ENCODE measurements at regions of chr3 and their contacts with region 1.

Region 1: DNA sequence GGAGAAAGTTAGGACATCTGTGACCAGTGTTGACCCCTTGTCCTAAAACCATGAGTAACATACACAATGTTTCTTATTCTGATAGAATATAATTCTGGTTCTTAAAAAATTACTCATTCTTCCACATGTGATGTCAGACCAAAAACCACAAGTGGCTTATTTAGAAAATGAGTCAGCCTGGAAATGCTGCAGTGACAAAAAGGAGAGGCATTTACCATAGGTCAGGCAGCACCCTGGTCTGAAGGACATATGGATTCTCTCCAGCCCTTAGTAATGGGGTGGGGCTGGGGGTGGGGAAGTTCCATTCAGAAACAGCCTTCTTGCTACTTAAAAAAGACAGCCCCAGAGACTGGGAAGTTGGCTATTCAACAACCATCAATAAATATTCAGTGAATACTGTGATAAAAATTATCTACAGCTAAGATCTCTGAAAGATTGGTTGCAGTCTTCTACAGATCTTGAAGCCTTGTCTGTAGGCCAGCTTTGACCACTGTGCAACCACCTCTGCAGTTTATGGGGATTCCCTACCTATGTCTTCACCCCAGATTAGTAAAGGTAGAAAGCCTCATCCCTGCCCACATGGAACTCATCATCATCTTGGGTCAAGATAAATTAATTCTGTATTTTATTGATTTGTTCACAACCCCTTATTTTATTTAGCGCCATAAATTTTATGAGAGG is 34.9 kb upstream of the TIMP4 start:
- DNase-seq: peak; percentile 90
- ATAC-seq: peak; percentile 81
- H3K4me3 ChIP-seq: peak overlapping the region in 1 of 2 experiments; percentile 23; a peak in 2 of 4 replicates
- H3K27ac ChIP-seq: peak overlapping the region; percentile 64
- H3K4me1 ChIP-seq: peaks cover 27 to 45% of the 10 kb centered on the region in 2 experiments
- H3K27me3 ChIP-seq: no peaks in the 10 kb centered on the region
- CTCF ChIP-seq: no peak
- POLR2A ChIP-seq: no peak
- RAD21 ChIP-seq: no peak

Region 2: DNA sequence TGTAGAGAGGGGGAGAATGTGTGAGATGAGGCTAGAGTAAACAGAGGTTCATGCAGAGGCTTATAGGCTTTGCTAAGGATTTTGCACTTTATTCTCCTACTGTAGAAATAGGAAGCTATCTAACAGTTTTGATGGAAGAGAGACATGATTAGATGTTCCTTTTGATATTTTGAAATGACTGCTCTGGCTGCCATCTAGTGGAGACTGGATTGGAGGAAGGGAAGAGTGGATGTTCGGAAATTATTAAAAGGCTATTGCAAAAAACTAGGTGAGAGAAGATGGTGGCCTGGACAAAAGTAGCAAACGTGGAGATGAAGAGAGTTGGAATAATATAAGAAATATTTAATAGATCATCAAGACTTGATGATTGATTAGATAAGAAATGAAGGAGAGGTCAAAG is 147.2 kb before region 1 on chr3:
- CTCF ChIA-PET with region 1: no interaction called
- POLR2A ChIA-PET with region 1: no interaction called
- RAD21 ChIA-PET with region 1: no interaction called
- intact Hi-C with region 1: no loop called
- DNase-seq: peak; percentile 16
- ATAC-seq: peak; percentile 52
- H3K4me3 ChIP-seq: no peak overlapping the region
- H3K27ac ChIP-seq: no peak overlapping the region
- H3K4me1 ChIP-seq: no peaks in the 10 kb centered on the region
- H3K27me3 ChIP-seq: no peaks in the 10 kb centered on the region; the same call in 1 of the 2 replicates
- CTCF ChIP-seq: peak; percentile 56 to 60 (median 57); a peak in 5 of 6 replicates
- POLR2A ChIP-seq: no peak
- RAD21 ChIP-seq: peak; percentile 70

Region 3: GRCh38 chr3:12081826-12082225 is 111.8 kb before region 1 on chr3:
- CTCF ChIA-PET with region 1: no interaction called
- POLR2A ChIA-PET with region 1: no interaction called
- RAD21 ChIA-PET with region 1: no interaction called
- intact Hi-C with region 1: no loop called
- DNase-seq: no peak
- ATAC-seq: no peak
- H3K4me3 ChIP-seq: no peak overlapping the region
- H3K27ac ChIP-seq: no peak overlapping the region
- H3K4me1 ChIP-seq: no peaks in the 10 kb centered on the region
- H3K27me3 ChIP-seq: no peaks in the 10 kb centered on the region
- CTCF ChIP-seq: no peak
- POLR2A ChIP-seq: no peak
- RAD21 ChIP-seq: no peak

Region 4: DNA sequence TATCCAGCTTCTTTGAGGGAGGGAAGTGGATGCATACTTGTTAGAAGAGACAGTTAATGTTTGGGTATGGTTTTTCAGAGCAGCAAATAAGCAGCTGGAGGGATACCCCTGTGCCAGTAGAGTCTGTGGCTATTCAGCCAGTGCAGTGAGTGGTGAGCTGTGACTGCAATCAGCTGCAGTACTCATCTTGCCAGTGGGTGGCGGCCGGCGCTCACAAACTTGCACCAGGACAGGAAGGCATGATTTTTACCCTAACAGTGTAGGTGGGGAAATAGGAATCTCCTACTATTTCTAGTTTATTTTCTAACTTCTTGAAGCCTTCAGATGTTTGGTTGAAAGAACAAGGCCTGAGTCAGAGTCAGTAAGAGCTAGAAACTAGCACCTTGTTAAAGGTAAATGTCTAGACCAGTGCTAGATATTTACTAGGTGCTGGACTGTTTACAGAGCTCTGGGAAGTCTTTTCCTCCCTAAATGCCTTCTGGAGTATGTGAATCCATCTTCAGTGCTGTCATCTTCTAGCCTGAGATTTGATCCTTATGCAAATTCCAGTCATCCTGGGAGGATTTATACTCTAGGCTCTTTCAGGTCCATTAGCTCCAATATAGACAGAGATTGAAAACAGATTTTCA is 58.5 kb before region 1 on chr3:
- CTCF ChIA-PET with region 1: interaction called, 12 read pairs
- POLR2A ChIA-PET with region 1: interaction called, 3 read pairs
- RAD21 ChIA-PET with region 1: no interaction called
- intact Hi-C with region 1: loop called (anchors 1 kb)
- DNase-seq: peak; percentile 34
- ATAC-seq: peak; percentile 96
- H3K4me3 ChIP-seq: no peak overlapping the region
- H3K27ac ChIP-seq: no peak overlapping the region
- H3K4me1 ChIP-seq: no peaks in the 10 kb centered on the region
- H3K27me3 ChIP-seq: no peaks in the 10 kb centered on the region
- CTCF ChIP-seq: peak; percentile 84 to 94 (median 90)
- POLR2A ChIP-seq: no peak
- RAD21 ChIP-seq: peak; percentile 96

Region 5: DNA sequence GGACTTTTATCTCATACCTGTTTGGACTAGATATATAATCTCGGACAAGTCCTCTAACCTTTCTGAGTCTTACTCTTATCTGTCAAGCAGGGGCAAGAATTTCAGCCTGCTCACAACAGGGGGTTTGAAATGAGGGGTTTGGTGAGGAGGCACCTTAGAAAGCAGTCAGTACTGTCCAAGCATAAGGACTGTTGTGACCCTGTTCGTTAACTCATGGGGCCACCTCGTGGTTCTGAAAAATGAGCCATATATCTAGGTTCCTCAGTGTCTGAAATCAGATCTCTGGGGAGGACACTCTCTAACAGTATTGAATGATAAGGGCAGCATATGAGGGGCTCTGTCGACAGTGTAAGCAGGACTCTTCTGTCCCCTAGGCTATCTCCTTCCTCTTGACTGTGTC is 27.7 kb before region 1 on chr3:
- CTCF ChIA-PET with region 1: no interaction called
- POLR2A ChIA-PET with region 1: no interaction called
- RAD21 ChIA-PET with region 1: no interaction called
- intact Hi-C with region 1: no loop called
- DNase-seq: no peak
- ATAC-seq: no peak
- H3K4me3 ChIP-seq: no peak overlapping the region
- H3K27ac ChIP-seq: no peak overlapping the region
- H3K4me1 ChIP-seq: no peaks in the 10 kb centered on the region
- H3K27me3 ChIP-seq: no peaks in the 10 kb centered on the region
- CTCF ChIP-seq: no peak
- POLR2A ChIP-seq: no peak
- RAD21 ChIP-seq: no peak

Region 6: DNA sequence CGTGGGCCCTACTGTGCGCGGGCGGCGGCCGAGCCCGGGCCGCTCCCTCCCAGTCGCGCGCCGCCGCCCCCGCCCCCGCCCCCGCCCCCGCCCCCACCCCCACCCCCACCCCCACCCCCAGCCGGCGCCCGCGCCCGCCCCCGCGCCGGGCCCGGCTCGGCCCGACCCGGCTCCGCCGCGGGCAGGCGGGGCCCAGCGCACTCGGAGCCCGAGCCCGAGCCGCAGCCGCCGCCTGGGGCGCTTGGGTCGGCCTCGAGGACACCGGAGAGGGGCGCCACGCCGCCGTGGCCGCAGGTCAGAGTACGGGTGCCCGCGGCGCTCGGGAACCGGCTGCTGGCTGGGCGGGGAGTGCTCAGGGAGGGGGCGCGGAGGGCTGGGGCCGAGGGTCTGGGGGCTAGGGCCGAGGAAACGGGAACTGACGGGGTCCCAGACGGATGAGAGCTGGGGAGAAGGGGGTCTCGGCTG is 94.1 kb after region 1 on chr3:
- CTCF ChIA-PET with region 1: no interaction called
- POLR2A ChIA-PET with region 1: no interaction called
- RAD21 ChIA-PET with region 1: no interaction called
- intact Hi-C with region 1: loop called (anchors 5 kb)
- DNase-seq: no peak
- ATAC-seq: peak; percentile 64
- H3K4me3 ChIP-seq: peak overlapping the region; percentile 71 to 73
- H3K27ac ChIP-seq: peak overlapping the region; percentile 87
- H3K4me1 ChIP-seq: peaks cover 10 to 24% of the 10 kb centered on the region in 2 experiments; a peak in 3 of 4 replicates
- H3K27me3 ChIP-seq: no peaks in the 10 kb centered on the region
- CTCF ChIP-seq: no peak
- POLR2A ChIP-seq: no peak
- RAD21 ChIP-seq: peak; percentile 39; the same call in 1 of the 2 replicates

Region 7: GRCh38 chr3:12303534-12303933 is 109.9 kb after region 1 on chr3:
- CTCF ChIA-PET with region 1: no interaction called
- POLR2A ChIA-PET with region 1: no interaction called
- RAD21 ChIA-PET with region 1: no interaction called
- intact Hi-C with region 1: loop called (anchors 5 kb)
- DNase-seq: no peak
- ATAC-seq: no peak
- H3K4me3 ChIP-seq: no peak overlapping the region
- H3K27ac ChIP-seq: no peak overlapping the region
- H3K4me1 ChIP-seq: peaks cover 32 to 85% of the 10 kb centered on the region in 2 experiments
- H3K27me3 ChIP-seq: no peaks in the 10 kb centered on the region
- CTCF ChIP-seq: no peak
- POLR2A ChIP-seq: no peak
- RAD21 ChIP-seq: no peak